Right lobe of liver (tissue), 6 donors: ENCODE measurements at regions of chr1 and their contacts with region 1.

Region 1: GRCh38 chr1:44594871-44595746 is 79.2 kb downstream of the TMEM53 start:
- DNase-seq: peak; percentile 82 to 89 (median 87)
- ATAC-seq: peak; percentile 92 to 98 (median 96)
- H3K4me3 ChIP-seq: no peak overlapping the region
- H3K27ac ChIP-seq: no peak overlapping the region
- H3K4me1 ChIP-seq: peaks cover 0 to 3% (median 0%) of the 10 kb centered on the region in 4 donors
- H3K27me3 ChIP-seq: no peaks in the 10 kb centered on the region
- CTCF ChIP-seq: peak; percentile 92 to 99 (median 99)
- POLR2A ChIP-seq: no peak

Region 2: GRCh38 chr1:44377925-44378784 is 217.0 kb before region 1 on chr1:
- intact Hi-C with region 1: loop called (anchors 10 kb)
- DNase-seq: peak in 2 of 3 donors; percentile 37 to 55
- ATAC-seq: peak; percentile 67 to 79 (median 70)
- H3K4me3 ChIP-seq: no peak overlapping the region
- H3K27ac ChIP-seq: no peak overlapping the region
- H3K4me1 ChIP-seq: no peaks in the 10 kb centered on the region
- H3K27me3 ChIP-seq: no peaks in the 10 kb centered on the region
- CTCF ChIP-seq: peak; percentile 66 to 82 (median 74)
- POLR2A ChIP-seq: no peak

Region 3: GRCh38 chr1:44505210-44505993 is 89.7 kb before region 1 on chr1:
- intact Hi-C with region 1: no loop called
- DNase-seq: peak in 1 of 3 donors; percentile 58
- ATAC-seq: peak in 2 of 4 donors; percentile 29 to 83
- H3K4me3 ChIP-seq: no peak overlapping the region
- H3K27ac ChIP-seq: no peak overlapping the region
- H3K4me1 ChIP-seq: no peaks in the 10 kb centered on the region
- H3K27me3 ChIP-seq: no peaks in the 10 kb centered on the region
- CTCF ChIP-seq: no peak
- POLR2A ChIP-seq: no peak

Region 4: GRCh38 chr1:44543064-44543744 is 51.9 kb before region 1 on chr1:
- intact Hi-C with region 1: no loop called
- DNase-seq: no peak
- ATAC-seq: no peak
- H3K4me3 ChIP-seq: no peak overlapping the region
- H3K27ac ChIP-seq: no peak overlapping the region
- H3K4me1 ChIP-seq: no peaks in the 10 kb centered on the region
- H3K27me3 ChIP-seq: no peaks in the 10 kb centered on the region
- CTCF ChIP-seq: no peak
- POLR2A ChIP-seq: no peak